ENCODE measurements at regions of chr15 and their contacts with region 1.

Region 1: DNA sequence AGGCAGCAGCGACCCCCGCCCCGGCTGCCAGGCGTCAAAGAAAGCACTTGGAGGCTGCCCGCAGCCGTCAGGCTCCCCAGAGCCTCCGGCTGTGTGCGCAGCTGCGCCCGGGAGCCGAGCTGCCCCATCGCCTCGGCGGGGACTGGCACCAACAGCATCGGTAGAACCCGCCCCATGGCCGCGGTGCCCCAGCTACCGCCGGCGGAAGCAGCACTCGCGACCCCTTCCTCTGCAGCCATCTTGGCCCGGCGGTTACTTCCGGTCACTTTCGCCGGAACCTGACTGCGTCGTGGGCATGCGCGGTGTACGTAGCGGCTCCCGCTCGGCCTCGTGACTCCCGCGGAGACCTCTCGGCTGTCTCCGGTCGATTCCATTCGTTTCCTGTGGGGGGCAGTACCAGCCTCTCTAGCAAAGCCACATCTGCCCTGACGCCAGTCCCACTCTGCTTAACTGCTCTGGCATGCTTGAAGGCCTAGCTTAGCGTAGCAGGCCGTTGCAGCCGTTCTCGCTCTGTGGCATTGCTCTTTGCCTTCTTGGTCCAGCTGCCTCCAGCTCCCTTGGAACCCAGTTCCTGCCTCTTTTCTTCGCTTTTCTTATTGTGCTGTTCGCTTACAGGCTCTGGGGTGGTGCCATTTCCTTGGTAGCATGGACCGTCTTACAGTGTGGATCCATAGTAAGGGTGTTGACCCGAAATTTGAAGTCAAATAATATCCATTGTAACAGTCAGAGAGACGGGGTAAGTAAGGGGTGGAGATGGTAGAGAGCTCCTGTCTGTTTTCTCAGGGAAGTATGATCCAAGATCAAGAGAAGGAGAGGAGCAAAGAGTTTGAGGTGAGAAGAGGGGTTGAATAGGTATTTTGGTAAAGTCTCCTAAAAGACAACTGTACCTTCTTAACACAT is at the start of gene SPG11:
- DNase-seq: peak; percentile 99
- H3K4me3 ChIP-seq: peak within 1 kb of the TSS; percentile 90 to 97 (median 93)
- H3K27ac ChIP-seq: peak within 1 kb of the TSS; percentile 98 to 100 (median 99)
- H3K4me1 ChIP-seq: peaks cover 19 to 28% (median 21%) of the 10 kb centered on the region in 4 donors
- H3K27me3 ChIP-seq: no peaks in the 10 kb centered on the region
- CTCF ChIP-seq: peak; percentile 92 to 99 (median 97)
- EP300 ChIP-seq: peak; percentile 20
- POLR2A ChIP-seq: peak; percentile 96
- total RNA-seq, gene SPG11: 79.7 to 149 (median 103) TPM

Region 2: GRCh38 chr15:44738340-44738984 is 74.8 kb after region 1 on chr15:
- in situ Hi-C with region 1: loop called (anchors 5 to 10 kb)
- intact Hi-C with region 1: loop called (anchors 1 kb)
- DNase-seq: no peak
- H3K4me3 ChIP-seq: no peak overlapping the region
- H3K27ac ChIP-seq: no peak overlapping the region
- H3K4me1 ChIP-seq: peaks cover 0 to 20% (median 2%) of the 10 kb centered on the region in 4 donors
- H3K27me3 ChIP-seq: no peaks in the 10 kb centered on the region
- CTCF ChIP-seq: peak; percentile 67 to 83 (median 74)
- EP300 ChIP-seq: no peak
- POLR2A ChIP-seq: no peak